Mammary epithelial cell (primary cell): ENCODE measurements at regions of chr10 and their contacts with region 1.

Region 1: DNA sequence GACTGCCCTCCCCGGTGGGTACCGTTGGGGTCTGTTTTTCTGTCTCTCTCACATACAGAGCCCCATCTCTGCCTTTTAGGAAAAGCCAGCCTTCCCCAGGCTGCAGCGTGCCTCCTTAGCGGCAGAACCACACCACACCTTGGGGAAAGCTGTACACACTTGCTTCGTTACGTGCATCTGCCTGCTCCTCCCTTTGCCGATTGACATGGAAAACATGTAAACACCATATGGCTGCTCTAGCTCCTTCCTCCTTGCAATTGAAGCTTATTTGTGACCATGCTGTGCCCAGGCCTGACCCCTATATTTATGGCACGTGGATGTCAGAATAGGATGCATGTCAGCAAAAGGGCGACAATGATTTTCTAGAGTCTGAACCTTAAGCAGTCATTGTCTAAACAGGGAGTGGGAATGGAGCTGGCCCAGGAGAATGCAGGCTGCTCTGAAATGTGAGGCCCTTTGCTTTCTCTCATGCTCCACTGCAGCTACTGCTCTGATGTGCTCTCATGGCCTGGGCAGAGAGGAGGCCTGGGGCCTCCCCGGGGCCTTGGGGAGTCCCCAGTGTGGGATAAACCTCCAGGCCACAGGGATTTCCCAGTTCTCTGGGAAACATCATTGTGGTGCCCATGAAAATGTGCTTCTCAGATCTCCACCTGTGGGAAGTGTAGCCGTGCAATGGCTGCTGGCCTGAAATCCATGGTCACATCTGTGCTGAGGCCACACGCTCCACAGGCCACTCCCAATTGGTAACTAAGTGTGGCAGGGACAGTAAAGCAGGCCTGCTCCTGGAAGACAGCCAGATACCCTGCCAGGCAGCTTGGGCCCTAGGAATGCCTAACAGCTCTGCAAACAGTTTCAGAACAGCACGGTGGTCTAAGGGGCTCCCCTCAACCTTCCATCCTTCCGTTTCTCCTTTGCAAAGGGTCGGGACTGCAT is 18.6 kb downstream of the PDE6C start:
- DNase-seq: no peak
- H3K4me3 ChIP-seq: no peak overlapping the region
- H3K27ac ChIP-seq: no peak overlapping the region
- H3K4me1 ChIP-seq: no peaks in the 10 kb centered on the region
- H3K27me3 ChIP-seq: no peaks in the 10 kb centered on the region
- CTCF ChIP-seq: no peak

Region 2: DNA sequence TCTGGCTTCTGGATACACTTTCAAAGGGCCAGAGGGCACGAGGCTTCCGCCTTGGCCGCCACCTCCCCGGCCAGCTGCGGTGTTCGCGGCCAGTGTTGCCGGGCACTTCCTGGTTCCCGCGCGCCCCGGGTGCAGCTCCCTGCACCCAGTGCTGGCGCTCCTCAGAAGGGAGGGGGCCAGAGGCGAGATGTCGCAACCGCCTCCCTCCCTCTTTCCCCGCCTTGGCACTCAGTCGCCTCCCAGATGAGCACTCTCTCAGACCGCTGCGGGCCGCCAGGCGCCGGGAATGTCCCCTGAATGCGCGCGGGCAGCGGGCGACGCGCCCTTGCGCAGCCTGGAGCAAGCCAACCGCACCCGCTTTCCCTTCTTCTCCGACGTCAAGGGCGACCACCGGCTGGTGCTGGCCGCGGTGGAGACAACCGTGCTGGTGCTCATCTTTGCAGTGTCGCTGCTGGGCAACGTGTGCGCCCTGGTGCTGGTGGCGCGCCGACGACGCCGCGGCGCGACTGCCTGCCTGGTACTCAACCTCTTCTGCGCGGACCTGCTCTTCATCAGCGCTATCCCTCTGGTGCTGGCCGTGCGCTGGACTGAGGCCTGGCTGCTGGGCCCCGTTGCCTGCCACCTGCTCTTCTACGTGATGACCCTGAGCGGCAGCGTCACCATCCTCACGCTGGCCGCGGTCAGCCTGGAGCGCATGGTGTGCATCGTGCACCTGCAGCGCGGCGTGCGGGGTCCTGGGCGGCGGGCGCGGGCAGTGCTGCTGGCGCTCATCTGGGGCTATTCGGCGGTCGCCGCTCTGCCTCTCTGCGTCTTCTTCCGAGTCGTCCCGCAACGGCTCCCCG is 64.2 kb before region 1 on chr10 and contains the start of gene FFAR4:
- CTCF ChIA-PET with region 1: no interaction called
- dilution Hi-C with region 1: no loop called
- in situ Hi-C with region 1: no loop called
- intact Hi-C with region 1: loop called (anchors 1 kb)
- DNase-seq: peak; percentile 34
- H3K4me3 ChIP-seq: peak within 1 kb of the TSS in 1 of 3 experiments; percentile 0
- H3K27ac ChIP-seq: no peak within 1 kb of the TSS
- H3K4me1 ChIP-seq: peaks cover 4% of the 10 kb centered on the region
- H3K27me3 ChIP-seq: peaks cover 30% of the 10 kb centered on the region
- CTCF ChIP-seq: no peak
- total RNA-seq, gene FFAR4: not detected

Region 3: DNA sequence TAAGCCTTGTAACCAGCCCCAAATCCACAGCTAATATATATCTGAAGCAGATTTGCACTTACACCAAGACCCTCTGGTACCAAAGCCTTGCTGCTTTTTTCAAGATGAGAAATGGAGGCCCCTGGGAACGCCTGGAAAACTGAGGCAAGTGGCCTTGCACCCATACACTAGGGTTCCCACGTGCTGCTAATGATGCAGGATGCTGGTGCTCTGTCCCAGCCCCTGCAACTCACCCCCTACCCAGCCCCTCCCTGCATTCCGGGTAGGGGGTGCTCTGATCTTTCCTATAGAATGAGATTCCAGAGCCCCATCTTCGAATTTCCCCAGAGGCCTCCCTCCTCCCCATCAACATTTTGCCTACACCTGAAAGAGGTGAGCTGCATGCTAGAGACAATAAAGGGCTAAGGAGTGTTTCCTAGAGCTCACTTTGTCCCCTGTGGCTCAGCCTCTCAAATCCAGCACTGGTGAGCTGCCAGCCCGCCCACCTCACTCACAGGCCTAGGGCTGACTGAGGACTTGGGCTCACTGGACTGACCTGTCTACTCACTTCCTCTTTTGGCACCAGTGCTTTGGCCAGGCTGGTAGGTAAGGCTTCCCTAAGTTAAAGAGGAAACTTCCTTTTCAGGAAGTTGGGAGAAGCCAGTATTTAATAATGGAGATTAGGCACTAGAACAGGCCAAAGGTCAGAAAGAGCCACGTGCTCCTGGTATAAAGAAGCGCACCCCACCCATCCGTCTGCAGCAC is 39.7 kb before region 1 on chr10:
- CTCF ChIA-PET with region 1: no interaction called
- dilution Hi-C with region 1: loop called (anchors 5 kb)
- in situ Hi-C with region 1: no loop called
- intact Hi-C with region 1: no loop called
- DNase-seq: no peak
- H3K4me3 ChIP-seq: no peak overlapping the region
- H3K27ac ChIP-seq: no peak overlapping the region
- H3K4me1 ChIP-seq: no peaks in the 10 kb centered on the region
- H3K27me3 ChIP-seq: peaks cover 2% of the 10 kb centered on the region
- CTCF ChIP-seq: no peak

Region 4: DNA sequence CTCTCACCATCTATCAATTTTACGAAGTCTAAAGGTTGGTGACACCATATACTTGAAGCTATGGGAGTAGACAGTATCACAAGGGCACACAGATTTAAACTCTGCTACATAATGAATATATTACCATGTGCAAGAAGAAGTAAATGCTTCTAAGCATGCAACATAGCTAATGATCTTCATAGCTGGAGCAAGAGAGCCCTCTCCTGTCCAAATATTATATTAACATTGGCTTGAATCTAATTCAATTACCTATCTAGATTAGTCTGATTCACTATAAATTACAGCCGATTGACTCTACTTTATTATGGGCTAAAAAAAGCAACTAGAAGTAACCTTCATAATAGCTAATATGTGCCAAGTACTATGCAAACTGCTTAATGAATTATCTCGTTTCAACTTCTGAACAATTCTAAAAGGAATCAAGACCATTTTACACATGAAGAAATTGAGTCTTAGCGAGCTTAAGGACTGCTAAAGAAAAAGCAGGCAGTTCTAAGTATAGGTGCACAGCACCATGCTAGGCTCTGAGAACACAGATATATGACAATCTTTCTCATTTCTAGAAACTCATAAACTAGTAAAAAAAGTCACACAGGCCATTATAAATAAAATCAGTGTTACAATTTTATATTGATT is 49.6 kb after region 1 on chr10:
- CTCF ChIA-PET with region 1: no interaction called
- dilution Hi-C with region 1: loop called (anchors 5 kb)
- in situ Hi-C with region 1: no loop called
- intact Hi-C with region 1: no loop called
- DNase-seq: peak; percentile 35
- H3K4me3 ChIP-seq: no peak overlapping the region
- H3K27ac ChIP-seq: no peak overlapping the region
- H3K4me1 ChIP-seq: no peaks in the 10 kb centered on the region
- H3K27me3 ChIP-seq: no peaks in the 10 kb centered on the region
- CTCF ChIP-seq: peak; percentile 24 to 44

Region 5: GRCh38 chr10:94490789-94491039 is 859.8 kb after region 1 on chr10:
- CTCF ChIA-PET with region 1: no interaction called
- dilution Hi-C with region 1: no loop called
- in situ Hi-C with region 1: no loop called
- intact Hi-C with region 1: no loop called
- DNase-seq: no peak
- H3K4me3 ChIP-seq: no peak overlapping the region
- H3K27ac ChIP-seq: no peak overlapping the region
- H3K4me1 ChIP-seq: no peaks in the 10 kb centered on the region
- H3K27me3 ChIP-seq: no peaks in the 10 kb centered on the region
- CTCF ChIP-seq: no peak